ENCODE measurements at regions of chr15 and their contacts with region 1.

Region 1: GRCh38 chr15:45333550-45333949 is 44.8 kb downstream of the GATM start:
- DNase-seq: peak; percentile 62 to 89
- ATAC-seq: peak; percentile 84 to 92 (median 88)
- H3K4me3 ChIP-seq: no peak overlapping the region
- H3K27ac ChIP-seq: peak overlapping the region in 7 of 10 donors; percentile 24 to 74 (median 61)
- H3K4me1 ChIP-seq: peaks cover 0 to 43% (median 11%) of the 10 kb centered on the region in 9 donors
- H3K27me3 ChIP-seq: peaks cover 0 to 4% (median 0%) of the 10 kb centered on the region in 7 donors
- CTCF ChIP-seq: no peak

Region 2: DNA sequence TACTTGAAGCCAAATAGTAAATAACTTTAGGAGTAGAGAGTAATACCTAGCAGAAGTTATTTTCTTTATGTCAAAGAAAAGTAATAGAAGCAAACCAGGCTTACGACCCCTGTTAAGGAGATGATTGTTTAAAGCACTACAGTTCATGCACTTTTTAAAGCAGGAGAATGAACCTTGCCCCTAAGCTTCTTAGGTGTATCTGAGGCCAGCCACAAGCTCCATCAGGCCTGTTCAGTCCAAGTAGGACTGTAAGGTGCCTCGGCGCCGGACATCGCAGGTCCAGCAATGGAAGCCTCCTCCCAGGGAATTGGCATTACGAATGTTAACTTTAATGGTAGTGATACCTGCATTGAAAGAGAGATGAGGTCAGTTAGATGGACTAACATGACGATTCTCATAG is 28.3 kb after region 1 on chr15:
- intact Hi-C with region 1: loop called in 1 of 10 experiments (anchors 1 kb)
- DNase-seq: no peak
- ATAC-seq: no peak
- H3K4me3 ChIP-seq: no peak overlapping the region
- H3K27ac ChIP-seq: no peak overlapping the region
- H3K4me1 ChIP-seq: peaks cover 0 to 21% (median 0%) of the 10 kb centered on the region in 9 donors
- H3K27me3 ChIP-seq: no peaks in the 10 kb centered on the region
- CTCF ChIP-seq: no peak

Region 3: GRCh38 chr15:45378149-45378912 is 44.8 kb after region 1 on chr15 and contains the start of gene GATM:
- intact Hi-C with region 1: loop called in 1 of 10 experiments (anchors 5 kb)
- DNase-seq: peak; percentile 74 to 79
- ATAC-seq: peak; percentile 89 to 96 (median 94)
- H3K4me3 ChIP-seq: peak within 1 kb of the TSS; percentile 41 to 91 (median 70)
- H3K27ac ChIP-seq: peak within 1 kb of the TSS; percentile 59 to 86 (median 84)
- H3K4me1 ChIP-seq: peaks cover 0 to 48% (median 25%) of the 10 kb centered on the region in 9 donors
- H3K27me3 ChIP-seq: peaks cover 0 to 37% (median 0%) of the 10 kb centered on the region in 7 donors
- CTCF ChIP-seq: peak in 8 of 9 donors; percentile 21 to 61 (median 46)
- total RNA-seq, gene GATM: 9.6 to 97.8 (median 30.8) TPM